ENCODE measurements at regions of chr5 and their contacts with region 1.

Region 1: DNA sequence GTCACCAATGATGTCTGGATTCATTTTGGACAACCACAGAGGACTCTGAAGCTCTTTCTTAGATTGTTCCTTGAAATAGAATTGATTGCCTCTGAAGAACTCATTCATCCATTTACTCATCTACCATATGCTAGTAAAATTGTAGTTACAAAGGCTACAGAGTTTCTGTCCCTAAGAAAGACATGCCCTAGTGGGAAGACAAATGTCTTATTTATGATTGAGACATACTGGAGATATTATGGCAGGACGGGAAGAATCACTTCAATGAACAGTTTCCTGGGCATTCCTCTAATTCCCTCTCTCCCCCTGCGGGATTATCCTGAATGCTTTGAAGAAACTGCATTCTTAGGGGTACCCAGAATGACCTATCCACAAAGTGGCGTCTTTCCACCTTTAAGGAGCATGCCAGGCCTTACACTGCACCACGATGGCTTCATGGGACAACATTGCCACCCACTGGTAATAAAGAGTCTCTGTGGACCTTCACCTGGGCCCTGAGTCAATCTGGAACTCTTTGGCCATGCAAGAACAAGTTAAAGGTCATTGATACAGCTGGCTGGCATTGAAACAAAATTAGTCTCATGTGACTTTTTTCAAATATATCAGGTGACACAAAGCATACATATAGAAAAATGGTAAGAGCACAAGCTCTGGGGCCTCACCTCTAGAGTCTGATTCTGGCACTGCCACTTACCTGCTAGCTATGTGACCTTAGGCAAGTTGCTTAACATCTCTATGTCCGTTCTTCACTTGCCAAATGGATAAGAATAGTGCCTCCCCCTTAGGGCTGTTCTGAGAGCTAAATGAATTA is 32.1 kb downstream of the ANKRD55 start:
- DNase-seq: peak; percentile 78
- ATAC-seq: peak; percentile 99
- H3K4me3 Mint-ChIP-seq: no peak overlapping the region
- H3K27ac Mint-ChIP-seq: peak overlapping the region; percentile 44
- H3K4me1 Mint-ChIP-seq: peaks cover 25% of the 10 kb centered on the region
- H3K27me3 Mint-ChIP-seq: no peaks in the 10 kb centered on the region

Region 2: DNA sequence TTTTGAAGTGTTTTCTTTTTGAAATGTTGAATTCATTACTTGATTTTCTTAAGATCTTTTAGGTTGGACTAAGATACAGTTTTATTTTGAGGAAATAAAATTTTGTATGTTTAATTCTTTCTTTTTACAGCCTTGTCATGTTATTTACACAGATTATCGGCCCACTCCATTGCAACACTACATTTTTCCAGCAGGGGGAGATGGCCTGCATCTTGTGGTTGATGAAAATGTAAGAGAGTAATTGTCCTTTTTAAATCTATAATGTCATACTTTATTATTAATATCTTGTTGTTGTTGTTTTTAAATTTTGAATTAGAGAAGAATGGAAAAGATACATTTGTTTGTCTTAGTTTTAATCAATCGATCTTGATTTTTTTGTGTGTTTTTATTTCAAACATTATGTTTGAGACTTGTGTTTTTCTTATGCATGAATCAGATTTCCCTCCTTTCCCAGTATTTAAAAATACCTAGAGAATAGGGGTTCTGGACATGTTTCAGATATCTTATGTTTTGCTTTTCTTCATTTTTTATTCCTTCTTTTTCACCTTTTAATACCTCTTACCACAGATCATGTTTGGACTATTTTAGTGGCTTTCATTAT is 856.6 kb before region 1 on chr5:
- CTCF ChIA-PET with region 1: no interaction called
- POLR2A ChIA-PET with region 1: no interaction called
- intact Hi-C with region 1: loop called in 1 of 2 experiments (anchors 10 kb)
- DNase-seq: peak; percentile 78
- ATAC-seq: no peak
- H3K4me3 Mint-ChIP-seq: no peak overlapping the region
- H3K27ac Mint-ChIP-seq: no peak overlapping the region
- H3K4me1 Mint-ChIP-seq: peaks cover 8% of the 10 kb centered on the region
- H3K27me3 Mint-ChIP-seq: no peaks in the 10 kb centered on the region

Region 3: DNA sequence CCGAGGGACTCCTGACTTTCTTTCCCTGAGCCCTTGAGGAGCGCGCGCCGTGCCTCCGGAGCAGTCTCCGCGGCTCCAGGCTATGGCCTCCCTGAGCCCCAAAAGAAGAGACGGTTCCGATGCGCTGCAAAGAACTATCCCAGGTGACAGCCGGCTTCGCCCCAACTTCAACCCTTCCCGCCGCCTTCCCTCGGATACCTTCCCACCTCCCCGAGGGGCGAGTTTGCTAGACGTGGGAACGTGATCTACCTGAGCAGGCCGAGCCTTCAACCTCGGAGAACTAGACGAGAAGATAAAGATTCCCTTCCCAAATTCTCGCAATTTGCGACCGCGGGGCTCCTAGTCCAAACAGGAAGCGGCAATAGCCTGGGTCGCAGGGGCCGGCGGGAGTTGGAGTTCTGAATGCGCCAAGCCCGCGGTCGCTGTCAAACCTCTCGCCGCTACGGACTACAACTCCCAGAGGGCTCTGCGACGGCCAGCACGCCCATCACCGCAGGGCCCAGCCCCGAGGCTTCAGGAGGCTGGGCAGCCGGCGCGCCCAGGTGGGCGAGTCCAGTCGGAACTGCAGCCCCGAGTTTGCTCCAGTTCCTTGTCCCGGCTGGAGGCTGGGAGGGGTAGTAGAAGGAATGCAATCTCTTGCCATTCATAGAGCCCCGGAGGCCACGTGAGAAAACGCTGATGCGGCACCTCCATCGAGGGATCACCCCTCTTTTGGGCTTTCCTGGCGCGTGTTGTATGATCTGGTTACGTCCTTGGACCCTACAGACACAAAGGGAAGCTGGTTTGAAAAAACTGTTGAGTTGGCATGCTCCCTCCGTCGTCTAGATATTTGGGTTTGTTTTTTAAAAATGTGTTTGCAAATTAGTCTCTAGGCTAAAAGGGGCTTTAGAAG is 488.8 kb before region 1 on chr5 and contains the start of gene SLC38A9:
- CTCF ChIA-PET with region 1: no interaction called
- POLR2A ChIA-PET with region 1: no interaction called
- intact Hi-C with region 1: loop called (anchors 1 to 10 kb)
- DNase-seq: peak; percentile 97
- ATAC-seq: peak; percentile 100
- H3K4me3 Mint-ChIP-seq: peak within 1 kb of the TSS; percentile 93
- H3K27ac Mint-ChIP-seq: peak within 1 kb of the TSS; percentile 92
- H3K4me1 Mint-ChIP-seq: peaks cover 24% of the 10 kb centered on the region
- H3K27me3 Mint-ChIP-seq: no peaks in the 10 kb centered on the region
- total RNA-seq, gene SLC38A9: 12.9 to 16.2 TPM

Region 4: DNA sequence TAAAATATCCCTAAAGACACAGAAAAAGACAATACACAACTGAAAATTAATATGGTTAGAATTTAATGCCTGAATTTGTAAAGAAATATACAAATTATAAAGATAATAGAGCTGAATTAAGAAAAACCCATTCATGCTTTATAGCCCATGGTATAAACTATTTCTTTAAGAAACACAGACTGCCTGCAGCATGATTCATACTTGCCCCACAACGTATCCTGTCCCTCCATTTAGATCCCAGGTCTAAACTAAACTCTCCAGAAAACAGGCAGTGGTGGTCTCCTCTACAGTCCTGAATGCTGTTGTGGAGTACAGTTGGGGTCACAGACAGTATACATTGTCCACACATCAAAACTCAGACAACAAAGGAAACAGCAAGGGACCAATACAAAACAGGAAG is 231.1 kb before region 1 on chr5:
- CTCF ChIA-PET with region 1: interaction called, 16 read pairs
- POLR2A ChIA-PET with region 1: no interaction called
- intact Hi-C with region 1: no loop called
- DNase-seq: no peak
- ATAC-seq: no peak
- H3K4me3 Mint-ChIP-seq: no peak overlapping the region
- H3K27ac Mint-ChIP-seq: peak overlapping the region; percentile 88
- H3K4me1 Mint-ChIP-seq: peaks cover 67% of the 10 kb centered on the region
- H3K27me3 Mint-ChIP-seq: no peaks in the 10 kb centered on the region

Region 5: DNA sequence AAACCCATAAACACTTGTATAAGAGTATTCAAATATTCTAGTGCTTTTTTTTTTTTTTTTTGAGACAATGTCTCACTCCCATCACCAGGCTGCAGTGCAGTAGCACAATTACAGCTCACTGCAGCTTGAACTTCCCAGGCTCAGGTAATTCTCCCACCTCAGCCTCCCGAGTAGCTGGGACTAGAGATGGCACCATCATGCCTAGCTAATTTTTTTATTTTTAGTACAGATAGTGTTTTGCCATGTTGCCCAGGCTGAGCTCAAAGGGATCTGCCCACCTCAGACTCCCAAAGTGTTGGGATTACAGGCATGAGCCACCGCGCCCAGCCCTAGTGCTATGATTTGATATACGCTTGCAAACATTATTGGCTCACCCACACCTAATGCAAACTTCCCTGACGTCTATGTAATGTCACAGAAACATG is 218.1 kb before region 1 on chr5:
- CTCF ChIA-PET with region 1: interaction called, 15 read pairs
- POLR2A ChIA-PET with region 1: interaction called, 15 read pairs
- intact Hi-C with region 1: loop called (anchors 1 kb)
- DNase-seq: peak; percentile 46
- ATAC-seq: peak; percentile 24
- H3K4me3 Mint-ChIP-seq: peak overlapping the region; percentile 37
- H3K27ac Mint-ChIP-seq: peak overlapping the region; percentile 67
- H3K4me1 Mint-ChIP-seq: peaks cover 77% of the 10 kb centered on the region
- H3K27me3 Mint-ChIP-seq: no peaks in the 10 kb centered on the region

Region 6: DNA sequence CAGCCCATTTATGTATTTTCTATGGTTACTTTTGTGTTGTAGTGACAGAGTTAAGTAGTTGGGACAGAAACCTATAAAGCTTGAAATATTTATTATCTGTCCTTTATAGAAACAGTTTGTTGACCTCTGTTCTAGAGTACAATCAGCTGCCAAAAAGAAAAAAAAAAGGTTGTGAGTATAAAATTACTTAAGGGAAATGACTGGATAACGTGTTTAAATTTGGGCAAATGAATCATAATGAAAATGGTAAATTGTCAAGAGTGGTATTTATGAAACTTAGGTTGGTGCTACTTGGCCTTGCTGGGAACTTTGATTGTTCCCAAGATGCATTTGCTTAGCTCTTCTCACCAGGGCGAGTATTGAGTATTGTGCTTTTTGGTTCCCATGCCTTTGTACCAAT is 136.1 kb before region 1 on chr5:
- CTCF ChIA-PET with region 1: interaction called, 3 read pairs
- POLR2A ChIA-PET with region 1: no interaction called
- intact Hi-C with region 1: loop called in 1 of 2 experiments (anchors 5 kb)
- DNase-seq: no peak
- ATAC-seq: peak; percentile 61
- H3K4me3 Mint-ChIP-seq: no peak overlapping the region
- H3K27ac Mint-ChIP-seq: no peak overlapping the region
- H3K4me1 Mint-ChIP-seq: peaks cover 68% of the 10 kb centered on the region
- H3K27me3 Mint-ChIP-seq: peaks cover 1% of the 10 kb centered on the region

Region 7: GRCh38 chr5:56080375-56081052 is 120.5 kb before region 1 on chr5:
- CTCF ChIA-PET with region 1: interaction called, 3 read pairs
- POLR2A ChIA-PET with region 1: no interaction called
- intact Hi-C with region 1: loop called in 1 of 2 experiments (anchors 5 kb)
- DNase-seq: peak; percentile 46
- ATAC-seq: peak; percentile 71
- H3K4me3 Mint-ChIP-seq: peak overlapping the region; percentile 43
- H3K27ac Mint-ChIP-seq: peak overlapping the region; percentile 92
- H3K4me1 Mint-ChIP-seq: peaks cover 54% of the 10 kb centered on the region
- H3K27me3 Mint-ChIP-seq: no peaks in the 10 kb centered on the region

Region 8: DNA sequence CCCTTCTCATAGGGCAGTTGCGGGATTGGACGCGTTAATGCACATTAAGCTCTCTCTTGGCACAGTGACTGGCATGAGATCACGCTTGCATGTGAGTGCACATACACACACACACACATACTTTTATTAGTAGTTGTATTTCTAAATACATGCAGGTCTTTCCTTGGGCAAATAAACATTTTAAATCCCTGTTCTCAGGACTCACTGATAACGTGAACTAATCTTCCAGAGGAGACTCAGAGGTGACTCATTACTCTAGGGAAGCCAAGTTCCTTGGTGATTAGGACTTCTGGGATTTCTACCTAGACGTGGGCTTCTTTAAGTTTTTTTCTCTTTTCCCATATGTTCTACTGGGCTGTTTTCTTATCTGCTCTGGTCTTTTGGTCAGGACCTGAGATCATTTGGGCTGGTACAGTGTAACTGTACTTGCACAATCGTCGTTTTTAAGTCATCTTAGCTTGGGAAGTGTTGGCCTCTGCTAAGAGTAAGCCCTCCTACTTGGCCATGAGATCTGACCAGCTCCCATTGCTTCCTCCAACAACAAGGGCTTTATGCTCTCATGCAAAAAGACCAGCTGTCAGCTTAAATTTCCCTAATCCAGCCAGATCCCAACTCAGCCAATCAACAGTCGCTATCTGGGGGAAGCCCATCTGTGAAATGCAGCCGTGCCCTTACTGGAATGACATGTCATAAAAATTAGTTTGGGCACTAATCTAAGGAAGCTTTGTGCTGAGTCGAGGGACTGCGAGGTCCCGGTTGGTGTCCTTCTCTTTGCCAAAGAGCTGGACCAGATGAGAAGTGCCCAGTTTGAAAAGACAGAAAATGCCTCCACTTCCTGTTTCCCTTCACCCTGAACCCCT is 208.5 kb after region 1 on chr5:
- CTCF ChIA-PET with region 1: no interaction called
- POLR2A ChIA-PET with region 1: no interaction called
- intact Hi-C with region 1: no loop called
- DNase-seq: no peak
- ATAC-seq: no peak
- H3K4me3 Mint-ChIP-seq: no peak overlapping the region
- H3K27ac Mint-ChIP-seq: no peak overlapping the region
- H3K4me1 Mint-ChIP-seq: peaks cover 11% of the 10 kb centered on the region
- H3K27me3 Mint-ChIP-seq: no peaks in the 10 kb centered on the region

Measured in activated CD4-positive, alpha-beta T cell treated with anti-CD3 and anti-CD28 coated beads for 36 hours (primary cell).